A673 (cell line): ENCODE measurements at regions of chr16 and their contacts with region 1.

Region 1: GRCh38 chr16:53773150-53773846 is 69.3 kb downstream of the FTO start:
- DNase-seq: peak; percentile 86
- H3K4me3 ChIP-seq: no peak overlapping the region
- H3K27ac ChIP-seq: no peak overlapping the region
- H3K4me1 ChIP-seq: peaks cover 42% of the 10 kb centered on the region
- H3K27me3 ChIP-seq: no peaks in the 10 kb centered on the region
- CTCF ChIP-seq: peak; percentile 77

Region 2: DNA sequence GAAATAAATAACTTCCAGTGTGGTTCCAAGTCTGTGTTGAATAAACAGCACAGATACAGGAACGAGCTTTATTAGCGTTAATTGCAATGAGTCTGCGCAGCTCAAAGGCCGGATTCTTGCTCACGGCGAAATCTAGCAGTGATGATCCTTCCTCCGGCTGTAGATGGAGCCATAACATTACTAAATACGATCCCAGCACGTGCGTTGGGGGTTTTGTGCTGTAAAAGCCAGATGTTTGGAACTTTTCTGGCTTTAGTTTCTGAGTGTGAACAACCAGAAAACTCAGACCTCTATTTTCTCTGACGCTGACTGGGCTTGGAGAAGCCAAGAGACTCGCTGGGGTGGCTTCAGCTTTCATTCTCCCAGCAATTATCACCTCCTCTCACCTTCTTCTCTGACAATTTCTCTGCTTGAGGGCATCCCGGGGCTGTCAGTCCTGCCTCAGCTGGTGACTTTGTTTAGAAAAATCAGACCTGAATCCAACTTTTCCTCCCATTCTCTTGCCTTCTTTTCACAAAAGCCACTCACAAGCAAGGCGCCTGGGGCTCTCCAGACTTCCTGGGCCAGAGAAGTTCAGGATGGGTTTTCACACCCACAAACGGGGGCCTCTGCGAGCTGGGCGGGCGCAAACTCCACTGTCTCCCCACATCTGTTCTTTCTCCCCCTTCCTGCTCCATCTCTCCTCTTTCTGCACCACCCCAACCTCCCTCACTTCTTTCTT is 223.2 kb before region 1 on chr16:
- CTCF ChIA-PET with region 1: no interaction called
- POLR2A ChIA-PET with region 1: no interaction called
- intact Hi-C with region 1: loop called (anchors 5 kb)
- DNase-seq: peak; percentile 90
- H3K4me3 ChIP-seq: no peak overlapping the region
- H3K27ac ChIP-seq: no peak overlapping the region
- H3K4me1 ChIP-seq: no peaks in the 10 kb centered on the region
- H3K27me3 ChIP-seq: no peaks in the 10 kb centered on the region
- CTCF ChIP-seq: peak; percentile 85

Region 3: DNA sequence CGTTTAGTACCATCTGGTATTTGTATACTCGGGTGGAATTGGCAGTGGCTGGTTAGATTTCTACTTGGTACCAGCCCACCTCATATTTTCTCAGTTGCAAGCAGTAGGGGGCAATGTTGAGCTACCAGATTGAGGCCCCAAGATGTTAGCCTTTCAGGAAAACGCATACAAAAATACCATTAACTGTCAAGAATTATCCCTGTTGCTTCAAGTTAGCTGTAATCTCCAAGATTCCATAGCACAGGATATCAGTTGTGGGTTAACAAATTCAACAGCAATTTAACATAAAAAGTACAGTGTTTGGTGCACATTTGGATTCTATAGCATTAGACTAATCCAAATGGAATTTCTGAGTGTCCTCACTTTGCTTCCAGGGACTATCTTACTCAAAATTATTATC is 118.9 kb after region 1 on chr16:
- CTCF ChIA-PET with region 1: interaction called, 4 read pairs
- POLR2A ChIA-PET with region 1: no interaction called
- intact Hi-C with region 1: loop called (anchors 5 kb)
- DNase-seq: peak; percentile 77
- H3K4me3 ChIP-seq: no peak overlapping the region
- H3K27ac ChIP-seq: no peak overlapping the region
- H3K4me1 ChIP-seq: peaks cover 42% of the 10 kb centered on the region
- H3K27me3 ChIP-seq: no peaks in the 10 kb centered on the region
- CTCF ChIP-seq: peak; percentile 85

Region 4: DNA sequence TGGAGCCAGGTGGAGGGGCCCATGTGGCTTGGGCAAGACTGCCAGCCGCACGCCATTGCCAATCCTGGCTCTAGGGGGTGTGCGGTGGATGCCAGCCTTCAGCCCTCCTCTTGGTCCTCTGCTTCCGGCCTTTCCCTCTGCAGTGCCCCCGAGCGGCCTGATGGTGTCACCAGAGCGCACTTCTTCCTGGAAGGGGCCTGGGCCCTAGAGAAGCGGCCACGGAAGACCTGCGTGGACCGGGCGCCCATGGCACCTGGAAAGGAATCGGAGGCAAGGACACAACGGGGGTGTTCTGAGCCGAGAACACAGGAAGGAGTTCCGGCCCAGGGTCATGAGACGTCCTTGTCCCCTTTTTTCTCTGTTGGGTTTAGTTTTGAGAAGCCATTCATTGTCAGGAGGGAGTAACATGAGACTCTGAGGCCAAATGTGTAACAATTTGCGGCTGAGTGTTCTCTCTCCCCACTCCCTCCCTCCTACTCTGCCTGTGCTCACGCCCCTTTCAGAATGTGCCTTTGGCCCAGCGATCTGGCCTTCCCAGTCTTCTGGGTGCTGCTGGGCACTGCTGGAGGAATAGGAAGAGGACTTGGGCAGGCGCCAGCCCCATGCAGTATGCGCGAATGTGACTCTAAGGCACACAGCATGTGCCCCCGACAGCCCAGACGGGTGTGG is 420.5 kb after region 1 on chr16:
- CTCF ChIA-PET with region 1: no interaction called
- POLR2A ChIA-PET with region 1: no interaction called
- intact Hi-C with region 1: loop called (anchors 5 kb)
- DNase-seq: peak; percentile 88
- H3K4me3 ChIP-seq: peak overlapping the region; percentile 22
- H3K27ac ChIP-seq: no peak overlapping the region
- H3K4me1 ChIP-seq: peaks cover 8% of the 10 kb centered on the region
- H3K27me3 ChIP-seq: peaks cover 8% of the 10 kb centered on the region
- CTCF ChIP-seq: peak; percentile 97

Region 5: DNA sequence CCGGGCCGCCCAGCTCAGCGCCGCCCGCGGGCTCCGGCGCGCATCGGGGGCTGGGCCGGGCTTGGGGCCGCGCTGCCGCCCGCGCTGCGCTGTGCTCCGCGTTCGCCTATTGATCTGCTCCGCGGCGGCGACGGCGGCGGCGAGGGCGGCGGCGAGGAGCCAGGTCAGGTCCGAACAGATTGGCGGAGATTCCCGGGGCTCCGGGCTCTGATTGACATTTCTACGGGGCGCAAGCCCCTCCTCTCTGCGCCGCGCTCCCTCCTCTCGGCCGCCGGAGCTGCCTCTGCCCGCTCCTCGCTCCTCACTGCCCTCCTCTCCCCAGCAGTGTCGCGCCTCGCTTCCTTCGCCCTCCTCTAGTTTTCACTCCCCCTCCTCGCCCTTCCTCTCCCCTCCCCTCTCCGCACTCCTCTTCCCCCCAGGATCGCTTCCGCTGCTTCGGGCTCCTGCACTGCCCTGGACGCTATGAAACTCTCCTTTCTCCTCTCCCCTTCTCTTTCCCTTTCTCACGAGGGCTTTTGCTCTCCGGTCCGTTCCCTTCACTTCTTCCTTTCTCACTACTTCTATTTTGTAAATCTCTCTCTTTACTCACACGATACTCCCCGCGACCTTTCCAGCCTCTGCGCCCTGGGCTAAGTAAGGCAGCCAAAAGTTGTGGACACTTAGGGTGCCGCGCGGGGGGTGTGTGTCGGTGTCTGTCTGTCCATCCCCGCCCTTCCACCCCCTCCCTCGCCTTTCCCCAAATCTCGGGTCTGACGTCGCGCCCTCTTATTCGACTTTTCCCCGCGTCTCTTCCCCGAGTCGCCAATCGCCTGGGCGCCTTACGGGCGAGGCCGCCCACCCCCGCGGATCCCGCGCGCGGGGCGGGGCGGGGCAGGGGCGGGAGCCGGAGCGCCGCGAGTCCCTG is 513.0 kb after region 1 on chr16 and contains the start of gene IRX3:
- CTCF ChIA-PET with region 1: no interaction called
- POLR2A ChIA-PET with region 1: no interaction called
- intact Hi-C with region 1: loop called (anchors 2 kb)
- DNase-seq: peak; percentile 97
- H3K4me3 ChIP-seq: peak within 1 kb of the TSS; percentile 74
- H3K27ac ChIP-seq: peak within 1 kb of the TSS; percentile 94
- H3K4me1 ChIP-seq: no peaks in the 10 kb centered on the region
- H3K27me3 ChIP-seq: no peaks in the 10 kb centered on the region
- CTCF ChIP-seq: no peak
- total RNA-seq, gene IRX3: 22.7 and 22.9 TPM in 2 replicates